Activated naive CD4-positive, alpha-beta T cell treated with anti-CD3 and anti-CD28 coated beads for 36 hours (primary cell): ENCODE measurements at regions of chr5 and their contacts with region 1.

Region 1: GRCh38 chr5:134145779-134146581 is 30.8 kb downstream of the SKP1 start:
- DNase-seq: peak; percentile 93
- H3K4me3 Mint-ChIP-seq: no peak overlapping the region
- H3K27ac Mint-ChIP-seq: peak overlapping the region; percentile 79
- H3K4me1 Mint-ChIP-seq: peaks cover 42% of the 10 kb centered on the region
- H3K27me3 Mint-ChIP-seq: no peaks in the 10 kb centered on the region

Region 2: GRCh38 chr5:134161513-134162395 is 15.8 kb after region 1 on chr5:
- CTCF ChIA-PET with region 1: interaction called, 12 read pairs
- intact Hi-C with region 1: no loop called
- DNase-seq: no peak
- H3K4me3 Mint-ChIP-seq: no peak overlapping the region
- H3K27ac Mint-ChIP-seq: peak overlapping the region; percentile 50
- H3K4me1 Mint-ChIP-seq: peaks cover 58% of the 10 kb centered on the region
- H3K27me3 Mint-ChIP-seq: no peaks in the 10 kb centered on the region

Region 3: DNA sequence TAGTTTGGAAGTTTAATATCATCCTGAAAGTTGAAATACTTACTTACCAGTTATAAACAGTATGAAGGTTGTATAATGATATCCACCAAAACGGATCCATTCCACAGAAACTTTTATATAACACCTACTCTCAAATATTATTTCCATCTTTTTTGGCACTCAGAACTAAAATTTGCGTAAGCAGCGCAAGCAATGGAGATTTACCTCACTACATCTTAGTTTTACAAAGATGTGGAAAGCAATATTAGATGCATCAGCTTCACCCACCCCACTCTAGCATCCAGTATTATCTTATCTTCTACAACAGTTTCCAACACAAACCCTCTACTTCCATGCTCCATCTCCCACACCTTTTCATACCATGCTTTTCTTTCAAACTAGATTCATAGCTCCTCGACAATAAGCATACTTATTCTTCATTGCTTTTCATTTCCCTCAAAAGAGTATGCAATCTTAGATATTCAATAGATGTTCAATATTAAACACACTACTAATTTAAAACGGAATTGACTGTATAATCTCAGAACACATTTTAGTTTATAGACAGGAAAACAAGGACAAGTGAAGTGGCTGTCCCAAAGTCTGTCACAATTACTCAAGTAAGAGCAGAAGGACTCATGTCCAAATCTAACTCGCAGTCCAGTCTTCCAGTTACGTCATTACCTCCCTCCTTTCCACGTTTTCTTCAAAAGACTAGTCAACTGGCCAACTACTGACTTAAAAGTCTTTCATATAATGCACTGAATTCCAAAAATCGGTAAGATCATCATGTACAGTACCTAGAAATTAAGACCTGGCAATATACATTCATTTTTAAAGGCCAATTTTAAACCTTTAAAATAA is 77.6 kb after region 1 on chr5:
- CTCF ChIA-PET with region 1: no interaction called
- intact Hi-C with region 1: no loop called
- DNase-seq: no peak
- H3K4me3 Mint-ChIP-seq: peak overlapping the region; percentile 96
- H3K27ac Mint-ChIP-seq: peak overlapping the region; percentile 79
- H3K4me1 Mint-ChIP-seq: peaks cover 73% of the 10 kb centered on the region
- H3K27me3 Mint-ChIP-seq: no peaks in the 10 kb centered on the region